Mucosa of descending colon (tissue), 3 donors: ENCODE measurements at regions of chr2 and their contacts with region 1.

Region 1: DNA sequence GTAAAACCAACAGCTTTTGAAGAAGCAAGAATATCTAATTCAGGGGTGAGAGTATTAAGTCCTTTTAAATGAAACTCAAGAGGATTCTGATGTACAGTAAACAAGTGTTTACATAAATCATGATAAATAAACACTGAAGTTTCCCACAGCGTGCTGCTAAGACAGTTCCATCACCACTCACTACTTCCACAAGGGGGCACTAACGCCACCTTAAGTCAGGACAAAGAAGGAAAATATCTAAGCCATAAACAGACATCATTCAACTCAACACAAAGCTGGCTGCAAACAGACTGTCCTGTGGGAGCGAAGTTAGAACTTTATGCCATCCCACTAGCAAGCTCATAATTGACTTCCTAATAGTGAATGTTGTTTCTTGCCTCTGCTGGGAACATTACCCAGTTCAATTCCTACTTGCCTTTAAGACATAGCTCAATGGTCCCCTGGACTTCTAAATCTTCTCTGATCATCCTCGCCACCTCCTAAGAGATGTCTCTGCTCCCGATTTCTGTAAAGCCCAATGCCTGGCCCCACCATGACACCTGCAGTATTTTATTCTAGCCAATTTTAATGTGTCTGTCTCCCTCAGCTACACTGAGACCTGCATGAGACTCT is 36.5 kb downstream of the MRPL44 start:
- DNase-seq: peak in 1 of 3 donors; percentile 93
- ATAC-seq: peak; percentile 85
- H3K4me3 ChIP-seq: no peak overlapping the region
- H3K4me1 ChIP-seq: no peaks in the 10 kb centered on the region
- CTCF ChIP-seq: peak; percentile 60

Region 2: DNA sequence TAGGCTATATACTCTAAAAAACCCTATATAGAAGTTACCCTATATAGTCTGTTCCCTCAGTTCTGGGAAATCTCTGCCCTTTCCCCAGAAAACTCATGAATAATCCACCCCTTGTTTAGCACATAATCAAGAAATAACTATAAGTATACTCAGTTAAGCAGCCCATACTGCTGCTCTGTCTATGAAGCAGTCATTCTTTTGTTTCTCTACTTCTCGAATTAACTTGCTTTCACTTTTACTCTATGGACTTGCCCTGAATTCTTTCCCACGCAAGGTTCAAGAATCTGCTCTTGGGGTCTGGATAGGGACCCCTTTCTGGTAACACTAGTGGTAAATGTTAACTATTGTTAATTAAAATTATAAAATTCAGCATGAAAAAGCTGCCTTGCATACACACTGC is 139.0 kb before region 1 on chr2:
- intact Hi-C with region 1: no loop called
- DNase-seq: no peak
- ATAC-seq: no peak
- H3K4me3 ChIP-seq: no peak overlapping the region
- H3K4me1 ChIP-seq: no peaks in the 10 kb centered on the region
- CTCF ChIP-seq: no peak

Region 3: GRCh38 chr2:224086226-224086914 is 92.6 kb after region 1 on chr2:
- intact Hi-C with region 1: no loop called
- DNase-seq: no peak
- ATAC-seq: peak; percentile 46
- H3K4me3 ChIP-seq: no peak overlapping the region
- H3K4me1 ChIP-seq: peaks cover 8% of the 10 kb centered on the region
- CTCF ChIP-seq: no peak

Region 4: GRCh38 chr2:224284134-224284946 is 290.6 kb after region 1 on chr2:
- intact Hi-C with region 1: loop called (anchors 5 to 10 kb)
- DNase-seq: peak in 1 of 3 donors; percentile 60
- ATAC-seq: peak; percentile 51
- H3K4me3 ChIP-seq: no peak overlapping the region
- H3K4me1 ChIP-seq: no peaks in the 10 kb centered on the region
- CTCF ChIP-seq: peak; percentile 9